Calu3 (cell line): ENCODE measurements at regions of chr3 and their contacts with region 1.

Region 1: GRCh38 chr3:187049462-187050101 is 89.7 kb downstream of the RPL39L start:
- DNase-seq: no peak
- H3K4me3 Mint-ChIP-seq: no peak overlapping the region
- H3K27ac Mint-ChIP-seq: no peak overlapping the region
- H3K4me1 Mint-ChIP-seq: no peaks in the 10 kb centered on the region
- H3K27me3 Mint-ChIP-seq: no peaks in the 10 kb centered on the region
- CTCF ChIP-seq: no peak

Region 2: DNA sequence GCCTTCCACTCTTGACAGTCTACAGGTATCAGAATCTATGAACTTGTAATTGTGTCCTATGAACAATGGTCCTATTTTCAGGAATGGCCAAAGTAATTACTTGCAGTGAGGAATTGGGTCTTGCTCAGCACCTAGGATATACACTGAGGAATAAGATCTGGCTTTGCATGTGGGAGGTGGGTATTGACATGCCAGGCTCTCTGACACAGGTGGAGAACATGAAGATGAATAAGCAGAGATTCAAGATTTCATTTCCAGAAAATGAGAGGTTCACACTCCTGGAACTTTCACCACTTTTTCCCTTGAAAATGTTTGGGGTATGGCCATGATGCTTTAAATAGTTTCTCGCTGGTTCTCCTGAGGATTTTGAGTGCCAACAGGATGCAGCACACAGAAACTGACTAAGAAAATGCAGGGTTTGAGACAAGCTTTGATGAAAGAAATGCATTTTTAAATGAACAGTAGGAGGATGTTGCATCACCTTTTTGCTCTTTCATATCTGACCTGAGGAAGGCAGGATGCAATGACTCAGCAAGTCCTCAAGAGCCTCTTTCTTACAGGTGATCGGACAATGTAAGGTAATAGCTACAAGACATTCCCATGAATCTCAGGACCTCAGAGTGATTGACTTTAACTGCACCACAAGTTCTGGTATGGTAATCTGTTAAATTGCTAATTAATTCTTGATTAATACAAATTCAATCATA is 380.1 kb before region 1 on chr3:
- CTCF ChIA-PET with region 1: no interaction called
- intact Hi-C with region 1: no loop called
- DNase-seq: peak; percentile 41
- H3K4me3 Mint-ChIP-seq: no peak overlapping the region
- H3K27ac Mint-ChIP-seq: peak overlapping the region; percentile 83
- H3K4me1 Mint-ChIP-seq: peaks cover 31% of the 10 kb centered on the region
- H3K27me3 Mint-ChIP-seq: no peaks in the 10 kb centered on the region
- CTCF ChIP-seq: no peak

Region 3: DNA sequence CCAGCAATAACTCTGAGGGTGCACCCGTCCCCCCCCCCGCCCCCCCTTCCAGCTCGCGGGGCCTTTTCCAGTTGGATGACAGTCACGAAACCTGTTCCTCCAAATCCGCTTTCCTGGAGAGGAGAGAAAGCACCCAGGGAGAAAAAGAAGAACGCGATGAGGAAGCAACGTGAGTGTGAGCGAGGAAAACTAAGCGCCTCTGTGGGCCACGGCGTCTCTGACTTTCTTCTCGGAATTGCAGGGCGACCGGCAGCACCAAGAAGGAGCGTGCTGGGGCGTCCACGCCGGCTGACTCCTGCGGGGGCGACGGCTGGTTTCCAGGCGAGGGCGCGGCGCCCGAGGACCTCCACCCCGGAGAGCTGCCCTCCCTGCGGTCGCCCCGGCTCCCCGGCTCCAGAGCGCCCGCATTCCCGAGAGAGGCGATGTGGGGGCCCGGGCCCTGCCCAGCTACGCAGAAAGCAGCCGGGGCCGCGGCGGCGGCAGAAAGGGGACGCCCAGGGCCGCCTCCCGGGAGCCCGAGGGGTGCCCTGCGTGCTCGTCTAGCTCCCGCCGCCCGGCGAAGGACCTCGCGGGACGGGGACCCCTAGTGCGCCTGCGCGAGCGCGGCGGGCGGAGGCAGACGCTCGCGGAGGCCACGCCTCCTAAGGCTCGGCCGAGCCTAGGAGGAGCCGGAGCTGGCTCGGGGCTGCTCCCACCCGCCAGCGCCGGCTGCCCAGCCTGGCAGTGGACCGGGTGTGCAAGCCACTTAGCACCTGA is 222.4 kb before region 1 on chr3:
- CTCF ChIA-PET with region 1: interaction called, 10 read pairs
- intact Hi-C with region 1: no loop called
- DNase-seq: peak; percentile 96
- H3K4me3 Mint-ChIP-seq: peak overlapping the region; percentile 55
- H3K27ac Mint-ChIP-seq: no peak overlapping the region
- H3K4me1 Mint-ChIP-seq: peaks cover 33% of the 10 kb centered on the region
- H3K27me3 Mint-ChIP-seq: peaks cover 84% of the 10 kb centered on the region
- CTCF ChIP-seq: no peak

Region 4: GRCh38 chr3:187139126-187139894 is 89.7 kb after region 1 on chr3 and contains the start of gene RPL39L:
- CTCF ChIA-PET with region 1: no interaction called
- intact Hi-C with region 1: no loop called
- DNase-seq: peak; percentile 96
- H3K4me3 Mint-ChIP-seq: peak within 1 kb of the TSS; percentile 84
- H3K27ac Mint-ChIP-seq: peak within 1 kb of the TSS; percentile 69
- H3K4me1 Mint-ChIP-seq: no peaks in the 10 kb centered on the region
- H3K27me3 Mint-ChIP-seq: no peaks in the 10 kb centered on the region
- CTCF ChIP-seq: peak; percentile 99
- total RNA-seq, gene RPL39L: 27.2 and 31.8 TPM in 2 replicates